K562 (cell line): ENCODE measurements at regions of chr2 and their contacts with region 1.

Region 1: GRCh38 chr2:170013802-170014551 is 164.0 kb upstream of the MYO3B start:
- DNase-seq: peak; percentile 89 to 98 (median 92)
- ATAC-seq: peak; percentile 84
- H3K4me3 ChIP-seq: no peak overlapping the region
- H3K27ac ChIP-seq: peak overlapping the region; percentile 78
- H3K4me1 ChIP-seq: peaks cover 17 to 46% of the 10 kb centered on the region in 2 experiments
- H3K27me3 ChIP-seq: no peaks in the 10 kb centered on the region
- CTCF ChIP-seq: peak in 1 of 3 experiments; percentile 14; a peak in 1 of 6 replicates
- EP300 ChIP-seq: peak; percentile 99
- POLR2A ChIP-seq: no peak; the same call in 1 of the 2 replicates
- RAD21 ChIP-seq: peak in 1 of 2 experiments; percentile 36; a peak in 2 of 4 replicates

Region 2: DNA sequence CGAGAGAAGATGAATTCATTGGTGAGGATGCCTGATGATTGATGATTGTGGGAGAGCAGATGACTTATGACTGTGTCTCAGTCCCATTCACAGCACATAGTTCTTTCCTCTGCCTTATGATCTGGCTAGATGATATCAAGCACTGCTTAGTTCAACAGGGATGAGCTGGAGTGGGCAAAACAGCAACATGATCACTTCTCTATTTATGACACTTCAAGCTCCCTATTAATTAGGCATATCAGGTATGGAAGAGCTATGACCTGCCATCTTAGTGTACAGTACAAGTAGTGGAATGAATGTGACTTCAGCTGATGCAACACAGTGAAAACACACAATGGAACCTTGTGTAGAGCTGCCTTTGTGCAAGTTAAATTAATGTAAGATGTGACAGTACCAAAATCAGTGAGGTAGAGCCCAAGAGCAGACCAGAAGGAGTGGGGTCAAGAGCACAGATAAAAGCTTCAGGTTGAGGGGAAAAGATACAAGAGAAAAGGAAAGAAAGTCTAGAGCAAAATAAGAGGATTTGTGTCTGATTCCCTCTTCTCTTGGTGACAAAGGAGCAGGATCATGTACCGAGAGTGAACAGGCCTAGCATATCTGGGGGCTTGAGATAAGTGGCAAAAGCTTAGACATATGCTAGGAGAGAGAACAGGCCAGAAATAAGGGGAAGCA is 71.0 kb after region 1 on chr2:
- CTCF ChIA-PET with region 1: no interaction called
- POLR2A ChIA-PET with region 1: interaction called, 4 read pairs
- in situ Hi-C with region 1: no loop called
- intact Hi-C with region 1: loop called (anchors 5 kb)
- DNase-seq: peak in 2 of 4 experiments; percentile 29 to 41
- ATAC-seq: peak; percentile 87
- H3K4me3 ChIP-seq: no peak overlapping the region
- H3K27ac ChIP-seq: peak overlapping the region; percentile 60; the same call in 2 of the 3 replicates
- H3K4me1 ChIP-seq: peaks cover 0 to 23% of the 10 kb centered on the region in 2 experiments; a peak in 3 of 5 replicates
- H3K27me3 ChIP-seq: no peaks in the 10 kb centered on the region
- CTCF ChIP-seq: no peak
- EP300 ChIP-seq: peak; percentile 45; the same call in 1 of the 2 replicates
- POLR2A ChIP-seq: peak; percentile 39; the same call in 1 of the 2 replicates
- RAD21 ChIP-seq: 0 out of 4 replicates have a peak, but pooled peaks of 1 of the 2 experiments have one; percentile 6

Region 3: GRCh38 chr2:170141865-170142264 is 127.9 kb after region 1 on chr2:
- CTCF ChIA-PET with region 1: no interaction called
- POLR2A ChIA-PET with region 1: no interaction called
- in situ Hi-C with region 1: no loop called
- intact Hi-C with region 1: loop called (anchors 2 kb)
- DNase-seq: no peak
- ATAC-seq: no peak
- H3K4me3 ChIP-seq: no peak overlapping the region
- H3K27ac ChIP-seq: no peak overlapping the region
- H3K4me1 ChIP-seq: peaks cover 28 to 44% of the 10 kb centered on the region in 2 experiments
- H3K27me3 ChIP-seq: no peaks in the 10 kb centered on the region
- CTCF ChIP-seq: no peak
- EP300 ChIP-seq: no peak
- POLR2A ChIP-seq: no peak
- RAD21 ChIP-seq: no peak